PC-3 (cell line): ENCODE measurements at regions of chr4 and their contacts with region 1.

Region 1: GRCh38 chr4:73704314-73705055 is 35.9 kb upstream of the CXCL8 start:
- DNase-seq: peak; percentile 100
- ATAC-seq: peak; percentile 62
- H3K4me3 ChIP-seq: 0 out of 2 replicates have a peak overlapping the region, but pooled peaks have one; percentile 6
- H3K27ac ChIP-seq: peak overlapping the region; percentile 96
- H3K4me1 ChIP-seq: peaks cover 80% of the 10 kb centered on the region
- H3K27me3 ChIP-seq: no peaks in the 10 kb centered on the region
- CTCF ChIP-seq: no peak

Region 2: DNA sequence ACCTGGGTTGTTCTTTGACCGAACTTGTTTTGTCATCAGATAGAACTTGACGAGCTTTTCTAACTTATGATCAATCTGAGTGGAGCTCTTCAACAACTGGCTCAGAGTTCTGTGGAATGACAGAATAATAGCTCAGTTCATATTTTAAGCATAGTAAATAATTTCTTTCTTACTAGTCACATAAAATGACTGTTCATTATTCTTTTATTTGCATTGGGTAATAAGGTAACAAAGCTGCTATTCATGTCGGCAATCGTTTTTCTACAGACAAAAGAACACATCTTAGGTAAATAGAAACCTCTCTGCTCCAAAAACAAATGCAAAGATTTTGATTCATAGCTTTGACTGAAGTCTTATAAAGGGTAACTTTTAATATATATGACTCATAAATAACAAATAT is 21.5 kb before region 1 on chr4:
- CTCF ChIA-PET with region 1: no interaction called
- POLR2A ChIA-PET with region 1: interaction called, 10 read pairs
- intact Hi-C with region 1: loop called (anchors 1 kb)
- DNase-seq: peak; percentile 98
- ATAC-seq: peak; percentile 75
- H3K4me3 ChIP-seq: no peak overlapping the region
- H3K27ac ChIP-seq: peak overlapping the region; percentile 96
- H3K4me1 ChIP-seq: peaks cover 71% of the 10 kb centered on the region
- H3K27me3 ChIP-seq: no peaks in the 10 kb centered on the region
- CTCF ChIP-seq: no peak

Region 3: DNA sequence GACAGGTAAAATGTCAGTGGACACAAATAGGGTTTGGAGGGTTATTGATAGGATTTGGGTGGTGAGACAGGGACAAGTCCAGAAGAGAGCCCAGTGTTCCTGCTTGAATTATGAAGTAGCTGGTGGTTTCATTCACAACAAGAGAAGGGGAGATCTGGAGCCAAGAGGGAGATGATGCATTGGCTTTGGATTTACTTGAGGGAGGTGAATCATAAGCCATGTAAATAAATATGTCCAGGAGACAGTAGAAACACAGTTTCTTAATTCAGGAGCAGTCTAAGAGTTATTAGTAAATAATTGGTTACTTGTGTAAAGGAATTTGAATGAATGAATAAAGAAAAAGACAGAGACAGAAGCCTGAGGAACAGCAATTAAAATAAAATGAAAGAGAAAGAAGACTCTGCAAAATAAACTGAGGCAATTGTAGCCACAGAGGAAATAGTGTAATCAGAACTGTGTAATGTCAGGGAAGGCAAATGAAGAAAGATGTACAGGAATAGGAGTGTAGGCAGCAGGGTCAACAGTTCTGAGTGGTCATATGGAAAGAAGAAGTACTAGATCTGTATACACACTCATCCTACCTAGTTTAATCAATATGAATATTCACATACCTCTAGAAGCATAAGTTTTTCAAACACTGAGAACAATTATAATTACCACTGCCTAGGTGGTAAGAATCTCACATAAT is 14.3 kb before region 1 on chr4:
- CTCF ChIA-PET with region 1: no interaction called
- POLR2A ChIA-PET with region 1: interaction called, 3 read pairs
- intact Hi-C with region 1: loop called (anchors 2 kb)
- DNase-seq: peak; percentile 89
- ATAC-seq: peak; percentile 79
- H3K4me3 ChIP-seq: no peak overlapping the region
- H3K27ac ChIP-seq: peak overlapping the region; percentile 94
- H3K4me1 ChIP-seq: peaks cover 48% of the 10 kb centered on the region
- H3K27me3 ChIP-seq: no peaks in the 10 kb centered on the region
- CTCF ChIP-seq: no peak

Region 4: GRCh38 chr4:73718375-73719373 is 14.2 kb after region 1 on chr4:
- CTCF ChIA-PET with region 1: interaction called, 3 read pairs
- POLR2A ChIA-PET with region 1: interaction called, 6 read pairs
- intact Hi-C with region 1: loop called (anchors 1 kb)
- DNase-seq: peak; percentile 72
- ATAC-seq: no peak
- H3K4me3 ChIP-seq: no peak overlapping the region
- H3K27ac ChIP-seq: peak overlapping the region; percentile 97
- H3K4me1 ChIP-seq: peaks cover 73% of the 10 kb centered on the region
- H3K27me3 ChIP-seq: no peaks in the 10 kb centered on the region
- CTCF ChIP-seq: no peak